ENCODE measurements at regions of chr9 and their contacts with region 1.

Region 1: DNA sequence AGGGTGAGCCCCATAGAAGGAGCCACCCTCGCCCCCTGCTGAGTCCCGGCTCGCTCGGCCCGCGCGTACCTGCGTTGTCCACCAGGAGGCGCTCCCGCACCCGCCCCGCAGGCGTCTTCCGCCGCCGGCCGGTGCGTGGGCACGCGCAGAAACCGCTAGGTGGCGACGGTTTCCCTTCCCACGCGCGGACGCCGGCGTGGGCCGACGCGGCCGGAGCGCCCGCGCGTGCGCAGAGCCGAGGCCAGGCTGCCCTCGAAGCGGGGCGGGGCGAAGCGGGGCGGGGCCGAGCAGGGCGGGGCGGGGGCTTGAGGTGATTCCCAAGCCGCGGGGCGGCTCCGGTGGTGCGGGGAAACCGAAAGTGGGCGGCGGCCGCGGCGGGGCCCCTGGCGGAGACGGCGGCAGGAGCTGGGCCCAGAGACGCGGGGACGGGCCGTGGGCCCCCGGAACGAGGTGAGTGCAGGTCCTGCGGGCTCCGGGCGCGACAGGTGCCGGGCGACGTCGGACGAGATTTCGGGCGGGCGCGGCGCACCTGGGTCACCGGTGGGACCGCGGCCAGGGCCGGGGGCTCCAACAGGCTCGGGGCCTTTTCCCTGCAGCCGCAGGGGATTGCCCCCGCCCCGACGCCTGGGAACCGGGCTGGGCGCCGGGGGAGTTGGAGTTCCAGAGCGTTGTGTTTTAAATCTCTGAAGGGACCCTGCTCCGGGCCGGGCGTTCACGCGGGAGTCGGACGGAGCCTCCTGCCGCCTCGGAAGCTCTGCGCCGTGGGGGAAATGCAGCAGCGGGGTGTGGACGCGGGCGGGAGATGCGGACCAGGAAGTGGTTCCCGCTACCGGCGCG is at the start of gene TDRD7:
- DNase-seq: peak; percentile 84 to 94
- ATAC-seq: peak; percentile 87 to 97 (median 96)
- H3K4me3 ChIP-seq: peak within 1 kb of the TSS; percentile 77 to 100 (median 98)
- H3K27ac ChIP-seq: peak within 1 kb of the TSS; percentile 23 to 95 (median 88)
- H3K4me1 ChIP-seq: peaks cover 5 to 21% (median 17%) of the 10 kb centered on the region in 9 donors
- H3K27me3 ChIP-seq: peaks cover 0 to 4% (median 0%) of the 10 kb centered on the region in 7 donors
- CTCF ChIP-seq: peak; percentile 94 to 100 (median 99)
- total RNA-seq, gene TDRD7: 7.1 to 12.8 (median 8.4) TPM

Region 2: DNA sequence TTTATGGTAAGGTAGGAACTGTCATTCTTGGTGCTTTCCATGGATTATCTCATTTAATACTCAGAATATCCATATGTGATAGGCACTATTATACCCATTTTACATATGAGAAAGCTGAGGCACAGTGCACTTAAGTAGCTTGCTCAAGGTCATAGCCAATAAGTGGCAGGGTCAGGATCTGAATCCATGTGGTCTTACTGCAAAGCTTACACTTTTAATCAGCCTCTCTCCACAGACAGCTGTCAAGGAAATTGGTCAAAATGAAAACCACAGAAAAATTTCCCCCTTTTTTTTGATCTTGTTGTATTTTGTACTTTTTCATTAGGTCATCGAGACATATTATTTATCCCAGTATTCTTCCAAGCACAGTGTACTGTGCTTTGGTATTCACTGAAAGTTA is 1458.0 kb before region 1 on chr9:
- intact Hi-C with region 1: no loop called
- DNase-seq: no peak
- ATAC-seq: no peak
- H3K4me3 ChIP-seq: no peak overlapping the region
- H3K27ac ChIP-seq: no peak overlapping the region
- H3K4me1 ChIP-seq: no peaks in the 10 kb centered on the region
- H3K27me3 ChIP-seq: no peaks in the 10 kb centered on the region
- CTCF ChIP-seq: no peak

Region 3: GRCh38 chr9:97362266-97363160 is 49.5 kb before region 1 on chr9:
- intact Hi-C with region 1: no loop called
- DNase-seq: no peak
- ATAC-seq: no peak
- H3K4me3 ChIP-seq: no peak overlapping the region
- H3K27ac ChIP-seq: no peak overlapping the region
- H3K4me1 ChIP-seq: no peaks in the 10 kb centered on the region
- H3K27me3 ChIP-seq: no peaks in the 10 kb centered on the region
- CTCF ChIP-seq: no peak

Region 4: DNA sequence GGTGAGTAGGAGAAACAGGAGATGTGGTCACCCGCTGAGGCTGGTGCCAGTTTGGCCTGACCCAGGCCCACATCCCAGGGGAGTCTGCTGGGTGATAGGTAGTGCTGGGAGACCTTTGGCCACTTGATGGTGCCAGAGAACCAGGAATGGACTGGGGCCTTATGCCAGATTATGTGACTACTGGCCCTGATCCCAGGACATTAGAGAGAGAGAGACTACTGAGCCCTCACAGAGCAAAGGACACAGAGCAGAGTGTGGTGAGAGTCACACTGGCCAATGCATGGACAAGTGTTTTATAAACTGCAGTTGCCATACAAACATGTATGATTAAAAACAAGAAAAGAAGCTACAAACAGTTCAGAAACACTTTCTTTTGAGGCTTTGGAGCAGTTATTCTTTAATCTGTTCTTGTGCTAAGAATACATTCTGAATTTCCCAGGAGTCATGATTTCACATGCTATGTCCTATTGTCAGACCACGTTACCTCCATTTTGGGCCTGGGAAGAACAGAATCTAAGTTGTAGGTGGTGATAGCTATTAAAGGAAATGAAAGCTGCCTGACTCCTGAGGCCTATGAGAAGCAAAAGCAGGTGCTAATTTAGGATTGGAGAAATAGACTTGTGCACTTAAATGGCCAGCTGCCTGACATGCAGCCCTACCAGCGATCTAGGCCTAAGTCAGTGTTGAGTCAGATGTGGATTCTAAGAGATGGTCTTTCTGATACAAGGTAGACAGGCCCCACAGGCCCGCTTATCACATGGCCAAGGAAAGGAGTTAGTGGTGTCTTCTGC is 56.8 kb after region 1 on chr9:
- intact Hi-C with region 1: no loop called
- DNase-seq: peak; percentile 56 to 85
- ATAC-seq: peak; percentile 95 to 98 (median 98)
- H3K4me3 ChIP-seq: no peak overlapping the region
- H3K27ac ChIP-seq: peak overlapping the region in 9 of 10 donors; percentile 17 to 72 (median 53)
- H3K4me1 ChIP-seq: peaks cover 0 to 24% (median 7%) of the 10 kb centered on the region in 9 donors
- H3K27me3 ChIP-seq: no peaks in the 10 kb centered on the region
- CTCF ChIP-seq: peak; percentile 58 to 95 (median 83)

Region 5: GRCh38 chr9:97615439-97616072 is 203.5 kb after region 1 on chr9:
- intact Hi-C with region 1: loop called in 8 of 10 experiments (anchors 5 to 10 kb)
- DNase-seq: peak in 1 of 2 donors; percentile 66
- ATAC-seq: peak; percentile 44 to 76 (median 66)
- H3K4me3 ChIP-seq: no peak overlapping the region
- H3K27ac ChIP-seq: peak overlapping the region in 1 of 10 donors; percentile 15
- H3K4me1 ChIP-seq: peaks cover 0 to 13% (median 7%) of the 10 kb centered on the region in 9 donors
- H3K27me3 ChIP-seq: no peaks in the 10 kb centered on the region
- CTCF ChIP-seq: peak; percentile 64 to 89 (median 85)